ENCODE measurements at regions of chr15 and their contacts with region 1.

Region 1: GRCh38 chr15:45611305-45611704 is 23.5 kb upstream of the SQOR start:
- DNase-seq: no peak
- ATAC-seq: no peak
- H3K4me3 Mint-ChIP-seq: no peak overlapping the region
- H3K27ac Mint-ChIP-seq: no peak overlapping the region
- H3K4me1 Mint-ChIP-seq: no peaks in the 10 kb centered on the region
- H3K27me3 Mint-ChIP-seq: no peaks in the 10 kb centered on the region
- CTCF ChIP-seq: peak; percentile 65

Region 2: GRCh38 chr15:45522328-45523160 is 88.8 kb before region 1 on chr15 and contains the start of gene SLC30A4:
- CTCF ChIA-PET with region 1: interaction called, 5 read pairs
- POLR2A ChIA-PET with region 1: no interaction called
- intact Hi-C with region 1: loop called (anchors 5 kb)
- DNase-seq: peak; percentile 58
- ATAC-seq: peak; percentile 85
- H3K4me3 Mint-ChIP-seq: peak within 1 kb of the TSS; percentile 88
- H3K27ac Mint-ChIP-seq: peak within 1 kb of the TSS; percentile 44
- H3K4me1 Mint-ChIP-seq: peaks cover 19% of the 10 kb centered on the region
- H3K27me3 Mint-ChIP-seq: peaks cover 4% of the 10 kb centered on the region
- CTCF ChIP-seq: peak; percentile 40
- total RNA-seq, gene SLC30A4: 1.7 to 2.0 TPM

Region 3: DNA sequence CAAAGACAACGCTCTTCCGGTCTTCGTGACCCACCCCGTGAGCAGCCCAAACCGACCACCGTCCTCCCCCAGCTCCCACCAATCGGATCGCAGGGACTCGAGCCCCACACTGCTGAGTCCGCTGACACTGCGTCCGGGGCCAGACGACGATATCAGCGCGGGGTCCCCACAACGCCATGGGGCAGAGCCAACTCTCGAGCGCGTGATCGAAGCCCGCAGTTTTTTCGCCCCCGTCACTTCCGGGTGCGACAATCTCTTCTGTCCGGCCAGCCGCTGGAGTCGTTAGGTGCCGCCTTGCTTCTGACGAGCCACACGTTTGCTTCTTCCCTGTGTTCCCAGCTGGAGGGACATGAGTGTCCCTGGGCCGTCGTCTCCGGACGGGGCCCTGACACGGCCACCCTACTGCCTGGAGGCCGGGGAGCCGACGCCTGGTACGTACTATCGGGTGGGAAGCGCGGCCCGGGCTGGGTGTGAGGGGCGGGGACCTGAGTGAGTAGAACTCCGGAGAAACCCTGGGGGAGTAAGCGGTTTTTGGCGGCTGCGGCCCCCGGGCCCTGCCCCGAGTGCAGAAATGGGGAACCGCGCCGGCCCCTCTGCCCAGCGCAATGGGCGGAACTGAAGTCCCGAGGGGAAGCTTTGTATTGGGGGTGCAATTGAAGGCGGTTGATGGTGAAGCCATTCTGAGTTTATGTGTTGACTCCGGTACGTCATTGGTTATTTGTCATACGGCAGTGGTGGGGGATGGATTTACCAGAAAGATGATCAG is 24.0 kb before region 1 on chr15 and contains the start of gene BLOC1S6:
- CTCF ChIA-PET with region 1: interaction called, 60 read pairs
- POLR2A ChIA-PET with region 1: interaction called, 8 read pairs
- intact Hi-C with region 1: no loop called
- DNase-seq: peak; percentile 92
- ATAC-seq: peak; percentile 93
- H3K4me3 Mint-ChIP-seq: peak within 1 kb of the TSS; percentile 99
- H3K27ac Mint-ChIP-seq: peak within 1 kb of the TSS; percentile 100
- H3K4me1 Mint-ChIP-seq: peaks cover 40% of the 10 kb centered on the region
- H3K27me3 Mint-ChIP-seq: no peaks in the 10 kb centered on the region
- CTCF ChIP-seq: no peak
- total RNA-seq, gene BLOC1S6: 43.3 to 46.9 TPM

Region 4: DNA sequence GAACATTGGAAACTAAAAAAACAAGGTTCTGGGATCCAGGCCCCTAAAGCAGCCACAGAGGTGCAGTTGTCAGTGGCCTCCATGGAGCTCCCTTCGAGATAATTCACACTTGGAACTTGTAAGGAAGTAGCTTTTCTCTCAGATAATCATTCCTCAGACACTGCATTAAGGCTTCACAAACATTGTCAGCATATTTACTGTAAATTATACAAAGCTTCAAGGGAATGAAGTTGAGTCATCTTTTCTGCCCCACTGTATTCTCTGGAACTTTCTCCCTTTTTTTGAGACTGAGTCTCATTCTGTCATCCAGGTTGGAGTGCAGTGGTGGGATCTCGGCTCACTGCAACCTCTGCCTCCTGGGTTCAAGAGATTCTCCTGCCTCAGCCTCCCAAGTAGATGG is 17.0 kb before region 1 on chr15:
- CTCF ChIA-PET with region 1: interaction called, 60 read pairs
- POLR2A ChIA-PET with region 1: no interaction called
- intact Hi-C with region 1: no loop called
- DNase-seq: no peak
- ATAC-seq: no peak
- H3K4me3 Mint-ChIP-seq: no peak overlapping the region
- H3K27ac Mint-ChIP-seq: no peak overlapping the region
- H3K4me1 Mint-ChIP-seq: peaks cover 23% of the 10 kb centered on the region
- H3K27me3 Mint-ChIP-seq: no peaks in the 10 kb centered on the region
- CTCF ChIP-seq: no peak

Measured in activated CD8-positive, alpha-beta T cell treated with anti-CD3 and anti-CD28 coated beads for 36 hours (primary cell).